AG04449 (cell line): ENCODE measurements at regions of chr2 and their contacts with region 1.

Region 1: DNA sequence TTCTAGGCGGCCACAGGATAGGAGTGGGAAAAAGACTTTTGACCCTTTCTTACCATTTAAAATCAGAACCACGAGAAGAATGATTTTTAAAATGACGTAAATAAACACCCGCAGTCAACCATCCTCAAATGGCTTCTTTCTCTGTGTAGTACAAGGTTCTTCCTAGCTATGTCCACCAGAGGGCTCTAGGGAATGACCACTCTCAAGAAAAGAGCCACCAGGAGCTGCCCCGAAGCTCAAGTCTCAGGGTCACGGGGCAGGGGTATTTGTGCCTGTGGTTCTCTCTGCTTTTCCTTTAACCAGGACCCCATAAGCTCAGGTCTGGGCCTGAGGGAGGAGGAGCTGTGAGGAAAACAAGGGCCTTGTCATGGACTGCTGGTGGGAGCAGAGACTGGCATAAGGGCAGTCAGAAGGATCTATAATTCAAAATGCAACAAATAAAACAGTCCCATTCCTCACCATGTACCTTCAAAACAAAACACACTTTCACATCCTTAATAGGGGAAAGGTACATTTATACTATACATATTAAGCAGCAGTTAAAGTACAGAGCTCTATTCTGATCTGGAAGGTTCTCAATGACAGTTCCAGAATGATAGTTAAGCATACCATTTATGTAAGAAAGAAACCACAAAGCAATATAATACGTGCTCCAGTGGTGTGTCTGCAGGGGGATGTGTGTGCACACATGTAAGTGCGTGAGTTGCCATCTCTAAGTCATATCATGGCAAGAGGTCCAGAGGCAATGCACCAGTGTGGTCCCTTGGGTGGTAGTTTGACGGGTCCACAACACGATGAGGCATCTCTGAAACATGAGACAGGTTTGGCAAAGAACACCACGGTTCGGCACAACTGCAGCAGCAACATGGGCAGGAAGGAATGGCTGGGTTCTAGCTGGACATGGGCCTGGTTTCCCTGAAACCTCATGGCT is 18.6 kb downstream of the LYPD1 start:
- DNase-seq: no peak
- H3K4me3 ChIP-seq: no peak overlapping the region
- CTCF ChIP-seq: peak; percentile 50

Region 2: GRCh38 chr2:132623096-132623839 is 28.1 kb before region 1 on chr2:
- CTCF ChIA-PET with region 1: interaction called, 10 read pairs
- POLR2A ChIA-PET with region 1: no interaction called
- DNase-seq: peak; percentile 28
- H3K4me3 ChIP-seq: no peak overlapping the region
- CTCF ChIP-seq: no peak

Region 3: GRCh38 chr2:132668987-132669853 is 17.8 kb after region 1 on chr2:
- CTCF ChIA-PET with region 1: interaction called, 19 read pairs
- POLR2A ChIA-PET with region 1: no interaction called
- DNase-seq: no peak
- H3K4me3 ChIP-seq: peak overlapping the region; percentile 66
- CTCF ChIP-seq: peak; percentile 20

Region 4: GRCh38 chr2:133171393-133172004 is 520.1 kb after region 1 on chr2:
- CTCF ChIA-PET with region 1: interaction called, 19 read pairs
- POLR2A ChIA-PET with region 1: no interaction called
- DNase-seq: no peak
- H3K4me3 ChIP-seq: no peak overlapping the region
- CTCF ChIP-seq: peak; percentile 44